GM23248 (cell line): ENCODE measurements at regions of chr22 and their contacts with region 1.

Region 1: GRCh38 chr22:50339945-50340879 is 2.9 kb upstream of the PPP6R2 start:
- DNase-seq: peak; percentile 34
- H3K4me3 ChIP-seq: no peak overlapping the region
- H3K27ac ChIP-seq: no peak overlapping the region
- H3K4me1 ChIP-seq: no peaks in the 10 kb centered on the region
- H3K27me3 ChIP-seq: no peaks in the 10 kb centered on the region

Region 2: GRCh38 chr22:50276143-50276542 is 64.1 kb before region 1 on chr22:
- in situ Hi-C with region 1: loop called (anchors 10 kb)
- DNase-seq: peak; percentile 66
- H3K4me3 ChIP-seq: no peak overlapping the region
- H3K27ac ChIP-seq: no peak overlapping the region
- H3K4me1 ChIP-seq: peaks cover 4% of the 10 kb centered on the region
- H3K27me3 ChIP-seq: no peaks in the 10 kb centered on the region

Region 3: DNA sequence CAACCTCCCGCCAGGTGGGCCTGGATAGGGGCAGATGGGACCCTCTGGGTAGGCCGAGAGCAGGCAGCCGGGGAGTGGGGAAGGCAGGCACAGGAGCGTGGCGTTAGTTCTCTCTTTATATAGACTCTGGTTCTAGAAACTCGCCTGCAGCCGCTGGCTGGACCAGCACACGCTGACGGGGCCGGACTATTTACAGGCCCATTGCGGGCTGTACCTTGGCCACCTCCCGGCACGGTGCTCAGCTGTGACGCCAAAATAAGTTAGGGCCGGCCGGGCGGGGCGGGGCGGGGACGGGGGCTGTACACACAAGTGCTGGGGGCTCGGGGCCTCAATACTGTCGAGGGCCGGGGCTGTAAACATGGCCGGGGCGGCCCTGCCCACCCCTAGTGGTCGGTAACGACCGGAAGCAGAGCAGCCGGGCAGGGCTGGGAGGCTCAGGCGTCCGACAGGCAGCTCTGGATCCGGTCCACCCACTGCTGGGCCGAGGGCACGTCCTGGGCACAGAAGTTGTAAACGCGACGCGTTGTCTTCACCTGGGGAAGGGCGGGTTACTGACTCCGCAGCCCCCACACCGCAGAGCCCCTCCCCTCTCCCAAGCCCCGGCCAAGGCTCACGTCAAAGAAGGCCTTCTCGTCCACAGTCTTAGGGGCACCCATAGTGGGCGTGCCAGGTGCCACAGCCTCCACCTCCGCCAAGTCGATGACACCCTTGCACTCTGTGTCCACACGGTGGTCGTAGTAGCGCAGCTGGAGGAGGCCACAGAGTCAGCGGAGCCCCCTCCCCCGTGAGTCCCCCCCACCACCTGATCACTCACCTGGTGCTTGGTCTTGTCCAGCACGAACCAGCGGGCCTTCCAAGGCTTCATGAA is 106.7 kb after region 1 on chr22:
- in situ Hi-C with region 1: no loop called
- DNase-seq: no peak
- H3K4me3 ChIP-seq: no peak overlapping the region
- H3K27ac ChIP-seq: no peak overlapping the region
- H3K4me1 ChIP-seq: no peaks in the 10 kb centered on the region
- H3K27me3 ChIP-seq: no peaks in the 10 kb centered on the region